Vagina (tissue), 2 donors: ENCODE measurements at regions of chr7 and their contacts with region 1.

Region 1: DNA sequence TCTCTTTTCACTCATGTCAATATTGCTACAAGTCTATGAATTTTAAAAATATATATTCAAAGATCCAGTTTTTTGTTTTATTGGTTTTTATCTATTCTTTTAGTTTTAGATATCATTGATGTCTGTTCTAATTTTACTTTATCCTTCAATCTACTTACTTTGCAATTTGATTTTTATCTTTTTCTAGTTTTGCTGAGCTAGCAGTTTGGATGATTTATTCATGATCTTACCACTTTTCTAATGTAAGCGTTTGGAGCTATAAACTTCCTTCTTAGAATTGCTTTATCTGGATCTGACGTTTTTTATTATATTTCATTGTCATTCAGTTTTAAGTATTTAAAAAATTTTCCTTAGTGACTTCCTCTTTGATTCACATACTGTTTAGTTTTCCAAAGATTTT is 664.5 kb upstream of the VSTM2A start:
- DNase-seq: no peak
- H3K4me3 ChIP-seq: no peak overlapping the region
- H3K27ac ChIP-seq: no peak overlapping the region
- H3K4me1 ChIP-seq: no peaks in the 10 kb centered on the region
- H3K27me3 ChIP-seq: no peaks in the 10 kb centered on the region
- CTCF ChIP-seq: no peak
- POLR2A ChIP-seq: no peak

Region 2: GRCh38 chr7:53984776-53985175 is 107.1 kb after region 1 on chr7:
- intact Hi-C with region 1: no loop called
- DNase-seq: no peak
- H3K4me3 ChIP-seq: no peak overlapping the region
- H3K27ac ChIP-seq: no peak overlapping the region
- H3K4me1 ChIP-seq: no peaks in the 10 kb centered on the region
- H3K27me3 ChIP-seq: no peaks in the 10 kb centered on the region
- CTCF ChIP-seq: no peak
- POLR2A ChIP-seq: no peak

Region 3: DNA sequence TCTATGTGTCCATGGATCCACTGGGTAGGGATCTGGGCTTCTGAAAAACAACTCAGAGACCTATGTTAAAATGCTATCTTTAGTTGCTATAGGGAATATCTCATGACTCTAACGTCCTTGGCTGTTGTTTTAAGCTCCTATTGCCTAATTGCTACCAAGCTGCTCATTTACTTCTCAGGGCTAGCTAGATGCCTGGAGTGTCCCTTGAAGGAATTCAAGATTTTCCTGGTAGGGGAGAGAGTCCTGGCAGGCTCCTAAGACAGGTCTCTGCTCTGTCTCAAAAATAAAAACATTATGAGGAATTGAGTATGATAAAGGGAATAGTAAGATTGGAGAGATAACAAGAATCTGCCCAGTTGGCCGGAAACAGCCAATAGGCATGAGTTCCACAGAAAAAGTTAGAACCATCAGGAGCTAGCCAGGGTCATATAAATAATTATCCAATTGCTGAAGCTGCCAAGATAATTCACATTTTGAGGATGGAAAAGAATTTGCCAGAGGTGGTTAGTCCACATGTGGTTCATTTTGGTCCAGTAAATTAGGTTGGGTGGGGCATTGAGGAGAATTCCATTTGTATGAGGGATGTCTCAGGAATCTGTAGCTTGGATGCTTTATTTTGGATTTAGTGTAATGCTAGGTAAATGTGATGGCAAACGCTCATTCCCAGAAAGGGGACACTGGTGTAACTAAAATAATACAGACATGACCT is 301.8 kb after region 1 on chr7:
- intact Hi-C with region 1: no loop called
- DNase-seq: no peak
- H3K4me3 ChIP-seq: no peak overlapping the region
- H3K27ac ChIP-seq: no peak overlapping the region
- H3K4me1 ChIP-seq: no peaks in the 10 kb centered on the region
- H3K27me3 ChIP-seq: no peaks in the 10 kb centered on the region
- CTCF ChIP-seq: no peak
- POLR2A ChIP-seq: no peak

Region 4: GRCh38 chr7:54860003-54860775 is 982.5 kb after region 1 on chr7:
- intact Hi-C with region 1: loop called (anchors 10 kb)
- DNase-seq: no peak
- H3K4me3 ChIP-seq: no peak overlapping the region
- H3K27ac ChIP-seq: peak overlapping the region; percentile 9
- H3K4me1 ChIP-seq: peaks cover 14% of the 10 kb centered on the region
- H3K27me3 ChIP-seq: no peaks in the 10 kb centered on the region
- CTCF ChIP-seq: no peak
- POLR2A ChIP-seq: no peak